Posterior vena cava (tissue), 2 donors: ENCODE measurements at regions of chr21 and their contacts with region 1.

Region 1: GRCh38 chr21:45140346-45140940 is 66.1 kb downstream of the ADARB1 start:
- DNase-seq: peak; percentile 93

Region 2: DNA sequence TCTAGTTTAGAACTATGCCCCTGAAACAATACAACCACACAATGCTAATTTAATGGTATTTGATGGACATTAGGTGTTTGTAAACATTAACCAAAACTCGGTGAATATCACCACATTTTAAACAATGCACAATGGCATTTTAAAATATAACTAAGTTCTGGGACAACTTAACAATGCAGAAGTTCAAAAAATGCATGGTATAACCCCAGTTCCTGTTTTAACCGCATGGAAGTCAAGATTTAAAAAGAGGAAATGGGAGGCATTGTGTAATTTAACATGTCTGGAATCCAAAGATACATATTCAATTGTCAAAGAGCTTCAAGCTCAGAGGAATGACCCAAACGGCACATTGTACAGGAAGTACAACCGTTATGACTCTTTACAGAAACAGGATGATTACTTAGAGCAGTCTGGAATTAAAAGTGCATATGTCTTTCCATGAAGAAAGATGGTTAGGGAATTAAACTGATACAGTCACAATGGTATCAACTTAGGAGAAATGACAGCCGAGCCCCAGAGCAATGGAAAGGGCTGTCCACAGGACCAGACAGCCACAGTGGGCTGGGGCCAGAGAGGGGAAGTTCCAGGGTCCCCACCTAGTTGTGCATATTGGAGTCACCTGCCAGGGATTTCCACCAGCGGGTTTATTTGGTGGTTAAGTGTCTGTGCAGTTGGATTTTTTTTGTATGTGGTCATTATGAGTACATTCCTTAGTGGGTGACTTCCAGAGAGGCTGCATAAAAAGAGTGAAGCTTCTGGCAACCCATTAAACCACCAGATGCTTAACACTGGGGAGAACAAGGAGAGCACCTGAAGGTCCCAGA is 259.5 kb before region 1 on chr21:
- intact Hi-C with region 1: loop called in 1 of 2 experiments (anchors 10 kb)
- DNase-seq: peak; percentile 62

Region 3: GRCh38 chr21:44932408-44933181 is 207.8 kb before region 1 on chr21:
- intact Hi-C with region 1: no loop called
- DNase-seq: no peak

Region 4: GRCh38 chr21:44949779-44950198 is 190.7 kb before region 1 on chr21:
- intact Hi-C with region 1: loop called (anchors 2 kb)
- DNase-seq: peak; percentile 95

Region 5: GRCh38 chr21:45209046-45209445 is 68.6 kb after region 1 on chr21:
- intact Hi-C with region 1: loop called in 1 of 2 experiments (anchors 10 kb)
- DNase-seq: no peak

Region 6: DNA sequence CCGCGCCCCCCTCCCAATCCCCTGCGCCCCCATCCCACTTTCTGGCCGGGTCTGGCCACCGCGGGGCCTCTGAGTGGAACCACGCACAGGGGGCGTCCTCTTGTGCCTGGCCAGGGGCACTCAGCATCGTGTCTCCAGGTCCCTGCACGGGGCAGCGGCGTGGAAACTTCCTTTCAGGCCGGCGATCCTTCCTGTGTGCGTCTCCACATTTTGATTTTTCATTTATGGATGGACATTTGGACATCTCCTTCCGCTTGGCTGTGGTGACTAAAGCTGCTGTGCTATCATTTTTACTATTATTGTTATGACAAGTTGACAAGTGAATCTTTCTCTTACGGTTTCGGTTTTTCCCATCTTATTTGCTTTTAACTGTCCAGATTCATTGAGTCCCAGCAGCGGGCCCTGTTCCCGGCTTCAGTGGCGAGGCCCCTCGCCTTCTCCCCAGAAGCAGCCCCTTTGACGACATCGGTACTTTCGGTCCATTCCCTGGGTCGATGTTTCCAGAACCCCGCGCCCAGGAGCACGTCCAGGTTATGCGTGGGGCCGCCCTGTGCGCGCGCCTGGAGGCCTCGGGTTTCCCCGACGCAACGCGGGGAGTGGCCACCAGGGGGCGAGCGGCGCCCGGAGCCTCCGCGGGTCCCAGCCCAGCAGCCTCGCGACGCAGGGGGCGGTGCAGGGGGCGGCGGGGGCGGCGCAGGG is 414.2 kb after region 1 on chr21:
- intact Hi-C with region 1: loop called in 1 of 2 experiments (anchors 5 kb)
- DNase-seq: peak; percentile 97